ENCODE measurements at regions of chr1 and their contacts with region 1.

Region 1: DNA sequence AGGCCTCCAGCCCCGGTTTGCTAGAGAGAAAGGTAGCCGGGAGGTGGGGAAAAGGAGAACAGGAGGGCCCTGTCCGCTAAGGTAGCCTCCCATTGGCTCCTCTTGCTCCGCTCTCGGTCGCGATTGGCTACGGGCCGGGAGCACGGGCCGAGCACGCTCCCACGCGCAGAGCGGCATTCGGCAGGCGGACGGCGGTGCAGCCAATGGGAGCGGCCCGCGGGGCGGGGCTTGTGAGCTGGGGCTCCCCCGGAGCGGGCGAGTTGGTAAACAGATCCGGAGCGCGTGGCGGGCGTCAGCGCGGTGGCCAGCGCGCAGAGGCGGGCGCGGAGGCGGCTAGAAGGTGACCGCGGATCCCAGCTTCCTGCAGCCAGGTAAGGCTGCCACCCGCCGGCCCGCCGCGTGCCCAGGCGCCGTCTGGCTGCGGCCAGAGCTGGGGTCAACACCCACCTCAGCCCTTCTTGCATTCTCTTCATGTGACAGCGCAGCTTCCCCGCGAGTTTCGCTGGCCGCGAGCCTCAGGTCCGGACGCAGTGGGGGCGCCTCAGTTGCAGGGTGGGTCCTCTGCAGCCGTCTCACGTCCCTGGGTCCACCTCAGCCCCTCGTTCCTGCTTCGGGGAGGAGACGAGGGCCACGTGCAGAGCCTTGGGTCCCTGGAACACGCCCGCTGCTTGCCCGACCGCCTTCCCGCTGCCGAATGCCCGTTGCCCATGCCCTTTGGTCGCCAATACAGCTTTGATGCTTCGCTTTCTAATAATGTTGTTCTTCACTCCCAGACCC is at the start of gene COQ8A:
- ATAC-seq: peak; percentile 90 to 96 (median 96)
- H3K4me3 ChIP-seq: peak within 1 kb of the TSS; percentile 44 to 68 (median 51)
- H3K27ac ChIP-seq: peak within 1 kb of the TSS; percentile 92 to 98
- H3K4me1 ChIP-seq: peaks cover 18 to 40% of the 10 kb centered on the region in 2 donors
- total RNA-seq, gene COQ8A: 12.8 to 31.6 (median 22.9) TPM

Region 2: DNA sequence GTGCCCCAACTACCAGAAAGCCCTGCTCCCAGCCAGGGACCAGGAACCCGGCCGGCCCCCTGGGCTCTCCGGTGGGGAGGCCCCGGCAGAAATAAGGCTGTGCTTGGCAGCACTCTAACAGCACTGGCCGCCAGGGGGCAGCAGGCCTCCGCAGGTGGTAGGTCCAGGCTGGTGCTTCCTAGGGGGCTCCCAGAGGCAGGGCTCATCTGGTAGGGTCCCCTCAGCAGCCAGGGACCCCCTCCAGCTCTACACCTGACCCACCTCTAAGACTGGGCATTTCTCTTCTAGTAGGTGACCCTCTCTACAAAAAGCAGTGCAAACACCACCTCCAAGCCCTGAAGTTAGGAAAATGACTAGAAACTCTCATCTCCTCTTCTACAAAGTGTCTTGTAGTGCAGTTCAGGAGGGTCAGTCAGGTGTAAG is 306.0 kb before region 1 on chr1:
- in situ Hi-C with region 1: loop called in 1 of 9 experiments (anchors 25 kb)
- ATAC-seq: peak; percentile 82 to 96 (median 92)
- H3K4me3 ChIP-seq: no peak overlapping the region
- H3K27ac ChIP-seq: no peak overlapping the region
- H3K4me1 ChIP-seq: peaks cover 0 to 7% of the 10 kb centered on the region in 2 donors

Measured in motor neuron (in vitro differentiated cells).